ENCODE measurements at regions of chr11 and their contacts with region 1.

Region 1: DNA sequence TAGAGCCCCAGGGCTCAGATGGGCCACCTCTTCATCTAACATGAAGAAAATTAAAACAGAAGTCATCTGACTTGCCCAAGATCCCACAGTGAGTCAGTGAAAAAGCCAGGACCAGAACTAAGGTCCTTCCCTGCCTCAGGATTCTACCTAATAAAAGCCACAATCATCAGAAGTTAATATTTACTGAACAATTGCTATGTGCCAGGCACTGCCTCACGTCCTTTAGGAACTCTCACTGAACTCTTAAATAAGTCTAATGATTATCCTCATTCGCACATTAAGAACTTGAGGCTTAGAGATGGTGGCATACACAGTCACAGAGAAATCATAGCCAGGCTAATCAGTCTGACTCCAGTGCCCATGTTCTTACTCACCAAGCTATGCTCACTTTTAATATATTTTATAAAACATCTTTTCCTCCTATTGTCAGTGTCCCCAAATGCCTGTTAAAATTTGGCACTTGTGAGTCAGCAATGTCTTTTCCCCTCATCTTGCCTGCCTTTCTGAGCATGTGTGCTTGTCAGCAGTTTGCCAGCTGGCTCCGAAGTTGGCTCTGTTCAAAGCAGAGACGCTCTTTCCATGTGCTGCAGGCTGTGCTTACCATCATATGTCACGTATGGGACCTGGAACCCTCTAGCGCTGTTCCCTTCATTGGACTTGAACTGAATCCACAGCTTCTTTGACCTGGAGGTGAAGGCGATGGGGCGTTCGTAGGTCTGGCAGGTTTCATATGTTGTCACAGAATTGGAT is 21.5 kb upstream of the NRIP3 start:
- DNase-seq: no peak
- H3K4me3 ChIP-seq: no peak overlapping the region
- H3K27ac ChIP-seq: no peak overlapping the region
- H3K4me1 ChIP-seq: peaks cover 2% of the 10 kb centered on the region
- H3K27me3 ChIP-seq: no peaks in the 10 kb centered on the region
- CTCF ChIP-seq: no peak
- EP300 ChIP-seq: no peak
- POLR2A ChIP-seq: no peak

Region 2: DNA sequence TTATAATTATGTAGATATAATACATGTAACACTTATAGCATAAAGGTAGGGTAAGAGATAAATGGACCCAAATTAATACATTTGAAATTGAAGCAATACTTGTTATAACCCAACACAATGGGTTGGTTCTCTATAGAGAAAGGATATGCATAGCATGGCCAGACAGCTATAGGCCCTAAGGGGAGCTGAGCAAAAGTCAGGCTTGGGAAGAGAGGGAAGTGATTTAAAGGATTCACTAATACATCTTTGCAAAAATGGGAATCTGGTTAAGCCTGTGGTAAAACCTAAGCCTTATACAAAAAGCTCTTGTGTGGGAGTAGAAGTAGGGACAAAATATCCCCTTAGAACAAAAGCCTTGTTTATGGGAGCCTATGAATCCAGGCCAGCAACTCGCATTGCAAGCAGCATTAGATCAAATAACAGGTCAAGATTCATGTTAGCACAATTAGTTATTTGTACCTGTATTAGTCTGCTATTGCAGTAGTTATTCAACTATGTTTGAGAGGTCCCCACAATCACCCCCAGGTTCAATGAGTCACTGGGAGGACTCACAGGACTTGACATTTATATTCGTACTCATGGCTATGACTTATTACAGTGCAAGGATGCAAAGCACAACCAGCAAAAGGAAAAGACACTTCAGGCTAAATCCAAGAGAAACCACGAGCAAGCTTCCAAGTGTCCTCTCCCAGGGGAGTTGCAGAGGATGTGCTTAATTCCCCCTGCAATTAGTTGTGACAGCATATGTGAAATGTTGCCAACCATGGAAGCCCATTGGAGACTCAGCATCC is 616.9 kb before region 1 on chr11:
- intact Hi-C with region 1: loop called in 1 of 4 experiments (anchors 2 kb)
- DNase-seq: no peak
- H3K4me3 ChIP-seq: no peak overlapping the region
- H3K27ac ChIP-seq: no peak overlapping the region
- H3K4me1 ChIP-seq: no peaks in the 10 kb centered on the region
- H3K27me3 ChIP-seq: no peaks in the 10 kb centered on the region
- CTCF ChIP-seq: no peak
- EP300 ChIP-seq: no peak
- POLR2A ChIP-seq: no peak